Activated CD4-positive, alpha-beta T cell treated with anti-CD3 and anti-CD28 coated beads, Interleukin-2, amount 10 ng/mL, durations not matched to agents 24 days and 14 days (primary cell): ENCODE measurements at regions of chr3 and their contacts with region 1.

Region 1: GRCh38 chr3:112074721-112075497 is 11.3 kb upstream of the C3orf52 start:
- DNase-seq: peak; percentile 84
- H3K4me3 Mint-ChIP-seq: peak overlapping the region; percentile 60
- H3K27ac Mint-ChIP-seq: peak overlapping the region; percentile 75
- H3K4me1 Mint-ChIP-seq: peaks cover 38% of the 10 kb centered on the region
- H3K27me3 Mint-ChIP-seq: no peaks in the 10 kb centered on the region

Region 2: DNA sequence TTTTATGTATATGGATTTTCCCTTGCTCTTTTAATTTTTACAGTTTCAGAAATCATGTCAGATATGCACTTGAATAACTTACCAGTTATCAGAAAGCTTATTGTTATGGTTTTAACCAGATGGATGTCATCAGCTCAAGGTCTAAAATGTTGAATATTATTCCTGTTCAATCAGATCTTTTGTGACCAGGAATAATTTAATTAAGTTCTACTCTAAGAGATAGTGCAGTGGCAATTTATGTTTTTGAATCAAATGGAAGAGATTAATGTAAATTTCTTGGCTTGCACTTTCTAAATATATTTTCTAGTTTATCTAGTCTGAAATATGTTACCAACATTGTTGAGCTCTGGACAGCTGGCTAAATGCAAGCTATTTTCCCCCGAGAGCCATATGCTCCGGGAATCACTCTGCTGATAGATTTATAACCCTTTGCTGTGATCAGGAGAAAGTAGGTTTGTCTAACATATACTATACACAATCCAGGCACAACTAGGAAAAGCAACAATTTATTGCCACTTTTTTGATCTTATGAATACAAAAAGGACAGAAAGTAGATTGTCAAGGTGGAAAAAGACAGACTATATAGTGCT is 609.7 kb before region 1 on chr3:
- intact Hi-C with region 1: no loop called
- DNase-seq: no peak
- H3K4me3 Mint-ChIP-seq: no peak overlapping the region
- H3K27ac Mint-ChIP-seq: no peak overlapping the region
- H3K4me1 Mint-ChIP-seq: no peaks in the 10 kb centered on the region
- H3K27me3 Mint-ChIP-seq: peaks cover 13% of the 10 kb centered on the region

Region 3: DNA sequence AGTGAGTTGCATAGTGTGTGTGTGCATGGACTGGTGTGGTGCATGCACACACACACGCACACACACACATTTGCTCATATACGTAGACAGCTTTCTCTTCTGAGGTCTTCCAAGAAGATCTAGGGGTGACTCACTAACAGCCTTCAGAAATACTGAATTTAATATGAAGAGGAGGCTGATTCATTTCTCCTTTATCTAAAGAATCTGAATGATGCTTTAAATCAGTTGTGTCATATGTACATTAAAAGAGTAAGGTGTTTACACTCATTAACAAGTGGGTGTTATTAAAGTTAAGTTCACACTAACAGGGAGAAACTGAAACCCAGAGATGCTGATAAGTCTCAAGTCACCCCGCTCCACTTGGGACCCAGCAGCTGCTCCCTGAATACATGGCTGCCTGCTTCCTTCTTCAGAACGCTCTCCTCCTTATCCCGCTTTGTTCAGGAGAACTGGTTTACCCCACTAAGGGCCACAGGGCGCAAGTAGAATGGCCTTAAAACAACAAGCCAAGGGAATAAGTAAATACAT is 18.4 kb before region 1 on chr3:
- intact Hi-C with region 1: loop called (anchors 2 kb)
- DNase-seq: peak; percentile 63
- H3K4me3 Mint-ChIP-seq: peak overlapping the region; percentile 27
- H3K27ac Mint-ChIP-seq: peak overlapping the region; percentile 27
- H3K4me1 Mint-ChIP-seq: peaks cover 19% of the 10 kb centered on the region
- H3K27me3 Mint-ChIP-seq: peaks cover 6% of the 10 kb centered on the region

Region 4: DNA sequence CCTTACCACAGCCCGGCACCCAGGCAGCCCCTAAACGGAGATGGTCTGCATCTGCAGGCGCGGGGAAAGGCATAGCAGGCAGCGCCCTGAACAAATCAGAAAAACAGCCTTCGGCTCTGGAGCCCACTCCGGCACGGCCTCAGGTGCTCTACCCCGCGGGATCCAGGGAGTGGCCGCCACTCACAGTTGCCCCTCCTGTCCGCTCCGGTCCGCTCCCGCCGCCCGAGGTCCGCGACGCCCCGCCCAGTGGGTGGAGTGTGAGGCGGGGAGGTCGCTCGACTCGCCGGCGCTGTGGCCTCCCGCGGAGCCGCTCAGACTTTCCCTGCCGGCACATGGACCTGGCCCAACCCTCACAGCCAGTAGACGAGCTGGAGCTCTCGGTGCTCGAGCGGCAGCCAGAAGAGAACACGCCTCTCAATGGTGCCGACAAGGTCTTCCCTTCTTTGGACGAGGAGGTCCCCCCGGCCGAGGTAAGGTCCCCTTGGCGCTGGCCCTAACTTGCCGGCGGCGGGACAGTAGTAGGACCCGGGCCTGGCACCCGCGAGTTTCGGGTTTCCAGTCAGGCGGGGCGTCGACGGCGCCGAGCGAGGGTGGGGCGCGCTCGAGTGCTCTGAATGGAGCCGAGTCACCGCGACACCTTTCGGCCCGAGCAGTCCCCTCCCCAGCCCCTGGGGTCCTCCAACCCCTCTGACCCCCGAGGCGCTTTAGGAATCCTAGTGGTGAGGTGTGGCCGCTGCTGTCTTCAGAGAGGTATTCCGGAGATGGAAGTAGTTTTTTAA is 11.4 kb after region 1 on chr3 and contains the start of gene C3orf52:
- intact Hi-C with region 1: loop called (anchors 1 kb)
- DNase-seq: peak; percentile 94
- H3K4me3 Mint-ChIP-seq: peak within 1 kb of the TSS; percentile 93
- H3K27ac Mint-ChIP-seq: peak within 1 kb of the TSS; percentile 87
- H3K4me1 Mint-ChIP-seq: peaks cover 48% of the 10 kb centered on the region
- H3K27me3 Mint-ChIP-seq: no peaks in the 10 kb centered on the region
- total RNA-seq, gene C3orf52: 13.0 and 14.2 TPM in 2 replicates